ENCODE measurements at regions of chr12 and their contacts with region 1.

Region 1: DNA sequence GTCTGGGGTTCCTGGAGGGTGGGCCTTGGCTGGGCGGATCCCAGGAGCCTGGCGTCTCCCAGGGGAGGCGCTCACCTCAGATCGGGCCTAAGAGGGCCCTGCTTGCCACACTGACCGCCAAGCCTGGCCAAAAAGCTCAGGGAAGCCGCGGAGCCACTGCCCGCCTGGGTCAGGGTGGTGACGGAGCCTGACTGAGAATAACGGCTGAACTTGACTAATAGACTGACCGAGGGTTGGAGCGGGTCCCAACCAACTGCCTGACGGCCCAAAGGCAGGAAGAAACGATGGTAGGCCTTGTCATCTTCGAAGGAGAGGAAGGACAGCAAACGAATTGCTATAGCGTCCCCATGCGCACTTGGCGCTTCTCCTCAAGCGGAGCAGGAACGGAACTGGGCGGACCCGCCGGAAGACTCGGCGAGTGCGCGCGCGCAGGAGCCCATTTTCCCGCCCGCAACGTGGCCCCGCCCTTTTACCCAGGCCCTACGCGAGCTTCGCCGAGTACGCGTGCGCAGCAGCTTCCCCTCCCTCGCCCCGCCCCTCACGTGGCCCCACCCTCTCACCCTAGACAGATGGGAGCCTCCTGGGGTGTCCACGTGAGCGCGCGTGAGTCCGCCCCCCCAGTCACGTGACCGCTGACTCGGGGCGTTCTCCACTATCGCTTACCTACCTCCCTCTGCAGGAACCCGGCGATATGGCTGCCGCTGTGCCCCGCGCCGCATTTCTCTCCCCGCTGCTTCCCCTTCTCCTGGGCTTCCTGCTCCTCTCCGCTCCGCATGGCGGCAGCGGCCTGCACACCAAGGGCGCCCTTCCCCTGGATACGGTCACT is at the starts of genes ERP29 and TMEM116:
- DNase-seq: peak; percentile 100
- ATAC-seq: peak; percentile 86
- H3K4me3 Mint-ChIP-seq: peak within 1 kb of the TSS; percentile 87
- H3K27ac Mint-ChIP-seq: peak within 1 kb of the TSS; percentile 96
- H3K4me1 Mint-ChIP-seq: peaks cover 48% of the 10 kb centered on the region
- H3K27me3 Mint-ChIP-seq: no peaks in the 10 kb centered on the region
- total RNA-seq, gene ERP29: 119 to 150 TPM
- total RNA-seq, gene TMEM116: 14.6 to 22.2 TPM

Region 2: DNA sequence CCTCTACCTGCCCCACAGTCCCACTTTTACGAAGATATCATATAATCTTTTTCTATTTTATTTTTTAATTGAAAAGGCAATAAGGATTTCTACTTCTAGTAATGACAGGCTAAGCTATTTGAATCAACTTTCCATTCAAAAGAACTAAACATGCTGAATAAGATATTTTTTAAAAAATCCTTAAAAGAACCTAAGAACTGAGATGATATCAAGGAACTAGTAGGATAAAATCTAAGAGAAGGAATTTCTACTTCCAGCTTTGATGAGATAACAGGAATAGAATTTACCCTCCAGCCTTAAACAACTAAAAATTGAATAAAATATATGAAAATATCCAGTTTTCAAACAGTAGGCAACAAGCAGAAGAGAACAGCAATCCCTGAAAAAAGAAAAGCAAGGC is 69.1 kb before region 1 on chr12:
- CTCF ChIA-PET with region 1: interaction called, 56 read pairs
- DNase-seq: no peak
- ATAC-seq: no peak
- H3K4me3 Mint-ChIP-seq: no peak overlapping the region
- H3K27ac Mint-ChIP-seq: no peak overlapping the region
- H3K4me1 Mint-ChIP-seq: peaks cover 19% of the 10 kb centered on the region
- H3K27me3 Mint-ChIP-seq: no peaks in the 10 kb centered on the region

Region 3: DNA sequence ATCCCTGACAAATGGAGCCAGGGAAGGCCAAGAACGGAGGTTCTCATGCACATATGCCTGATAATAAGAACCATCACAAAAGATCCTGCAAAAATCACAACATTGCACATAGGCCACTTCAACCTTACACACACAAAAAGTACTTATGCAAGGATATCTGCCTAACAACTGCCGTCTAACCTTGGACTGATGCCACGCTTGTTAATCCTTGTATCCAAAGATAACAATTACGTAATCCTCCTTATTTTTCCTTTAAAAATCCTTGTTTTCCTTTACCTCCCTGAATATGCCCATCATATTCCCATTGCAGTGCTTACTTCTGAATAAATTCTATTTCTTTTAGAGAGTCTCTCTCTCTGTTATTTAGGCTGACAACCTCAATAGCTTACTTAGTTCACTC is 59.5 kb before region 1 on chr12:
- CTCF ChIA-PET with region 1: interaction called, 16 read pairs
- DNase-seq: no peak
- ATAC-seq: no peak
- H3K4me3 Mint-ChIP-seq: no peak overlapping the region
- H3K27ac Mint-ChIP-seq: no peak overlapping the region
- H3K4me1 Mint-ChIP-seq: peaks cover 18% of the 10 kb centered on the region
- H3K27me3 Mint-ChIP-seq: no peaks in the 10 kb centered on the region

Region 4: DNA sequence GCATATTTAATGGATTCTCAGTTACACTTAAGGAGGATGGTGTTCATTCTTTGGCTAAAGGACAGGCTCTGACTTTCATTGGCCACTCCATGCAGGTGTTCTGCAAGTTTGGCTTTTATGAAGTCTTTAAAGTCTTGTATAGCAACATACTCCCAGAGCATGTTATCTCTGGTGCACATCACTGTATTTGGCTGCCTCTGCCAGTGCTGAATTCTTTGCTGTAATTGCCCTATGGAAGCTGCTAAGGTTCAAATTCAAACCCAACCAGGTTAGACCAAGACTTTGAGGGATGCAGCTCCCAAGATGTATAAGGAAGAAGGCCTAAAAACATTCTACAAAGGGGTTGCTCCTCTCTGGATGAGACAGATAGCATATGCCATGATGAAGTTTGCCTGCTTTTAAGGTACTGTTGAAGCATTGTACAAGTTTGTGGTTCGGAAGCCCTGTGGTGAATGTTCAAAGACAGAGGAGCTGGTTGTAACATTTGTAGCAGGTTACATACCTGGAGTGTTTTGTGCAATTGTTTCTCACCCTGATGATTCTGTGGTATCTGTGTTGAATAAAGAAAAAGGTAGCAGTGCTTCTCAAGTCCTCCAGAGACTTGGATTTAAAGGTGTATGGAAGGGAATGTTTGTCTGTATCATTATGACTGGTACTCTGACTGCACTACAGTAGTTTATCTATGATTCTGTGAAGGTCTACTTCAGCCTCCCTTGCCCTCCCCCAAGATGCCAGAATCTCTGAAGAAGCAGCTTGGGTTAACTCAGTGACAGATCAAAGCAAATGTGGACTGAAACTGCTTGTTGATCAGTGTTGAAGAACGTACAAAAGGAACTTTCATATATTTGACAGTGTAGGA is 19.5 kb before region 1 on chr12:
- CTCF ChIA-PET with region 1: interaction called, 60 read pairs
- DNase-seq: peak; percentile 58
- ATAC-seq: peak; percentile 68
- H3K4me3 Mint-ChIP-seq: peak overlapping the region; percentile 80
- H3K27ac Mint-ChIP-seq: peak overlapping the region; percentile 86
- H3K4me1 Mint-ChIP-seq: peaks cover 54% of the 10 kb centered on the region
- H3K27me3 Mint-ChIP-seq: no peaks in the 10 kb centered on the region

Region 5: GRCh38 chr12:112001576-112001975 is 11.4 kb before region 1 on chr12:
- CTCF ChIA-PET with region 1: interaction called, 60 read pairs
- DNase-seq: no peak
- ATAC-seq: peak; percentile 63
- H3K4me3 Mint-ChIP-seq: peak overlapping the region; percentile 50
- H3K27ac Mint-ChIP-seq: peak overlapping the region; percentile 78
- H3K4me1 Mint-ChIP-seq: peaks cover 56% of the 10 kb centered on the region
- H3K27me3 Mint-ChIP-seq: no peaks in the 10 kb centered on the region

Region 6: DNA sequence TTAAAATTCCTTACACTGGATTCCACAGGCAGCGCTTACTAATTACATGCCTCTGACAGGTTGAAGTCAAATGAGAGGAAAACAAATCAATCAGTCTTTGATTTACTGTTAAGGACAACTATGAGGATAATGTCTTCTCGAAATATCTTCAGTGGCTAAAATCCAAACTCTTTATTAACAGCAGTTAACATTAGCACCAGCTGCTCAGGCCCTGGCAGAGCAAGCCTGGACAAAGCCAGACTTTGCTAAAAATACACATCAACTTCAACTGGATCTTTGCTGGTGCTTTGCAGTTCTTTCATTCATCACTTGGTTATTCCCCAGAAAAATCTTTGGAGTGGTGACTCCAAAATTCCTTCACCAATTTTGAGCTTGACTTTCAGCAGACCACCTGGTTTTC is 270.6 kb after region 1 on chr12:
- CTCF ChIA-PET with region 1: no interaction called
- DNase-seq: no peak
- ATAC-seq: no peak
- H3K4me3 Mint-ChIP-seq: no peak overlapping the region
- H3K27ac Mint-ChIP-seq: no peak overlapping the region
- H3K4me1 Mint-ChIP-seq: no peaks in the 10 kb centered on the region
- H3K27me3 Mint-ChIP-seq: no peaks in the 10 kb centered on the region